ENCODE measurements at regions of chr11 and their contacts with region 1.

Region 1: GRCh38 chr11:117205211-117205818 is 6.1 kb downstream of the TAGLN start:
- DNase-seq: no peak
- H3K4me3 ChIP-seq: no peak overlapping the region
- H3K27ac ChIP-seq: peak overlapping the region in 4 of 8 donors; percentile 73 to 81 (median 79)
- H3K4me1 ChIP-seq: peaks cover 0 to 44% (median 15%) of the 10 kb centered on the region in 6 donors
- H3K27me3 ChIP-seq: no peaks in the 10 kb centered on the region
- CTCF ChIP-seq: no peak
- POLR2A ChIP-seq: no peak

Region 2: DNA sequence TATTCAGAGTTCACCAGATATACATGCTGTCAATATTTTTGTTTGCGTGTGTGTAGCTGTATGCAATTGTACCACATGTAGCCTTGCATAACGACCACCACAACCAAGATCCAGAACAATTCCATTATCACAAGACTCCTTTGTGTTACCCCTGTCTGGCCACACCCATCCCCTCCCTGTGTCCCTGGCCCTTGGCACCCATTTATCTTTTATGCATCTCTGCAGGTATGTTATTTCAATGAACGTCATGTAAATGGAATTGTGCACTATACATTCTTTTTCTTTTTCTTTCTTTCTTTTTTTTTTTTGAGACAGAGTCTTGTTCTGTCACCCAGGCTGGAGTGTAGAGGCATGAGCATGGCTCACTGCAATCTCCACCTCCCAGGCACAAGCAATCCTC is 70.9 kb before region 1 on chr11:
- intact Hi-C with region 1: loop called (anchors 5 kb)
- DNase-seq: no peak
- H3K4me3 ChIP-seq: no peak overlapping the region
- H3K27ac ChIP-seq: no peak overlapping the region
- H3K4me1 ChIP-seq: peaks cover 0 to 5% (median 0%) of the 10 kb centered on the region in 6 donors
- H3K27me3 ChIP-seq: no peaks in the 10 kb centered on the region
- CTCF ChIP-seq: no peak
- POLR2A ChIP-seq: no peak

Measured in spleen (tissue), 13 donors.